A549 (cell line): ENCODE measurements at regions of chr3 and their contacts with region 1.

Region 1: DNA sequence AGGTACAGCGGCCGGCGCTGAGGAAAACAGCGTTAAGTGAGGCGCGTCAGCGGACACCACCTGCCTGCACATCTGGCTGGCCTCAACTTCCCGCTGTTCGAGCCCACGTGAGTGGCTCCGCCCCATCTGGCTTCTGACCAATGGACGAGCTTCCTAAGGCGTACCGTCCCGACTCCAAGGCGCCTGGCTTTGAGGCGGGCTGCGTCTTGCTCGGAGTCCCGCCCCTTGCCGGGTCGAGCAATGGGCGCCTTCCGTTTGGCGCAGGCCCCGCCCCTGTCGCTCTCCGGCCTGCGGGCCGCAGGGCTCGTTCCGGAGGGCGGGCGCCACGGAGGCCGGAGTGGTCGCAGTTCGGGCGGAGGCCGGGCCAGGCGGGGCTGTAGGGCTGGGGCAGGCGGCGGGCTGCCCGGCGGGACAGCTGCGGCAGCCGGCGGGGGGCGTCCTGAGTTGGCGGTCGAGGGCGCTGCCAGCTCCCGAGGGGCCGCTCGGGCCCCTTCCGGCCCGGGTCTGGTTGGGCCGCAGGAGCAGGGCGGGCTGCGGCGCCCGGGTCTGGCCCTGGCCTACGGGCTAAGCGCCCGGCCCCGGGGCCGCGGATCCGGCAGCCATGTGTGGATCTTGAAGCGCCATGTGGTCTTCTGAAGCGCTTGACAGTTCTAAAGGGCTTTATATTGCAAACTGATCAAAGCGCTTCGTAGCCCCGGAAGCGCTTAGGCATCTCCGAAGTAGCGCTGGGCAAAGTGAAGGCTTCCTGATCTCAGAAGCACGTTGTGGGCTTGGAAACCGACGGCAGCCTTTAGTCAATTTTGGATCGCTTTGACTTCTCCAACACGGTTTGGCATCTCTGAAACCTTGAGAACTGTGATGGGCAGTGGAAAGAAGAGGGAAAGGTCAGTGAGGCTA is at the start of gene TATDN2:
- DNase-seq: peak; percentile 97 to 99
- ATAC-seq: peak; percentile 96 to 99
- H3K4me3 ChIP-seq: peak within 1 kb of the TSS; percentile 72
- H3K27ac ChIP-seq: peak within 1 kb of the TSS; percentile 82 to 95
- H3K4me1 ChIP-seq: peaks cover 20% of the 10 kb centered on the region
- CTCF ChIP-seq: no peak
- EP300 ChIP-seq: no peak
- POLR2A ChIP-seq: peak; percentile 68
- RAD21 ChIP-seq: no peak
- polyA plus RNA-seq, gene TATDN2: 22.4 and 27.6 TPM in 2 replicates

Region 2: GRCh38 chr3:10142707-10143566 is 105.5 kb before region 1 on chr3:
- CTCF ChIA-PET with region 1: no interaction called
- POLR2A ChIA-PET with region 1: interaction called, 12 read pairs
- DNase-seq: peak; percentile 26 to 35
- ATAC-seq: peak in 1 of 2 experiments; percentile 12; a peak in 3 of 6 replicates
- H3K4me3 ChIP-seq: peak overlapping the region; percentile 87
- H3K27ac ChIP-seq: peak overlapping the region; percentile 90 to 97
- H3K4me1 ChIP-seq: peaks cover 15% of the 10 kb centered on the region
- CTCF ChIP-seq: no peak
- EP300 ChIP-seq: no peak
- POLR2A ChIP-seq: no peak
- RAD21 ChIP-seq: no peak